Cardiac septum (tissue), 1 donor: ENCODE measurements at regions of chr21 and their contacts with region 1.

Region 1: GRCh38 chr21:39601187-39601928 is 11.4 kb upstream of the B3GALT5 start:
- DNase-seq: no peak

Region 2: GRCh38 chr21:39650801-39651595 is 49.6 kb after region 1 on chr21:
- intact Hi-C with region 1: loop called (anchors 5 kb)
- DNase-seq: peak; percentile 33